A673 (cell line): ENCODE measurements at regions of chr16 and their contacts with region 1.

Region 1: DNA sequence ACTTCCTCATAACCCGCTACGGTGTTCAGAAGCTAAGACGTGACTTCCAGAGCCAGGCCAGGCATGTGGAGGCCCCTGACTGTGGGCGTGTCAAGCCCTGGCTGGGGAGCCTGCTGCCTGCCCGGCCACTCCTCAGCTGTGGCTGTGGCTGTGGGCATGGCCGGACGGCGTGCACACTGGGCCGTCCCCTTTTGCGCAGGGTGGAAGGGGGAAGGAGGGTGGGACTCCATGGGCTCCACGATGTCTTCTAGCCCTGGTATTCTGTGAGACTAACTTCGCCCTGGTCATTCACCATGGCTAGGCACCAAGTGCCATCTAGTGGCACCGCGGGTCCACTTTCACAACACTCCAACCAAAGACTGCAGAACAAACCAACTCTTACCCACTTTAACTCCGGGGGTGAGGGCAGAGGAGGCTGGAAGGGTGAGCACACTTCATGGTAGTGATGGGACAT is 67.9 kb downstream of the N4BP1 start:
- DNase-seq: peak; percentile 60
- H3K4me3 ChIP-seq: no peak overlapping the region
- H3K27ac ChIP-seq: no peak overlapping the region
- H3K4me1 ChIP-seq: no peaks in the 10 kb centered on the region
- H3K27me3 ChIP-seq: no peaks in the 10 kb centered on the region
- CTCF ChIP-seq: peak; percentile 65

Region 2: DNA sequence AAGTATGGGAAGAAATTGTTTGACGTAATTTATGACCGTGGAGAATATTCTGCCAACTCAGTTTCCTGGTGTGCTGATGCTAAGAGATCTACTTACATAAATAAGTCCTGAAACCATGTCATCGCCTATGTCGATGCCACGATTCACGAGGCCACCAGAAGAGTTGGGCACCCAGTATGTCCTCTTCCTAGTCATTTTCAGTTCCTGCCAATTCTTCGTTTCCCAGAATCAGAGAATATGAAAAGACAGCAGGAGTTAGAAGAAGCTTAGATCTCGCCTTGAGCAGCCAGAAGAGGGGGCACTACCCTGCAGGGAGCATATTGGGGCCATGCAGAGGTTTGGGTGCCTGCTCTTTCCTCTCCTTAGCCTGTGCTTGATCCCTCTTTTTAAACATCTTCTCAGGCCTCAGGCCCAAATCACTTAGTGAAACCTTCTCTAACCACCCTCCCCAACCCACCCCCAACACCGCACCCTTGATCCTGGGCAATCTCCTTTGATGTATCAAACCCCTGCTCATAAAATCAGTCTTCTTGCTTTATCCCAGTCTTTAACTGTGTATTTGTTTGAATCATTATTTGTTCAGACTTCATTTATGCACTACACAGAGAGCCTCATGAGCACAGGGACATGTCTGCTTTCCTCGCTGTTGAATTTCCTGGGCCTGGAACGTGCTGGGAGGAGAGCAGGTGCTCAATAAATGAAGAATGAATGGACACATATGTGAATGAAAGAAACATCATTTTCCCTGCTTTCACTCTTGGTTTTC is 310.1 kb before region 1 on chr16:
- CTCF ChIA-PET with region 1: no interaction called
- POLR2A ChIA-PET with region 1: no interaction called
- intact Hi-C with region 1: loop called (anchors 5 kb)
- DNase-seq: peak; percentile 59
- H3K4me3 ChIP-seq: no peak overlapping the region
- H3K27ac ChIP-seq: no peak overlapping the region
- H3K4me1 ChIP-seq: no peaks in the 10 kb centered on the region
- H3K27me3 ChIP-seq: no peaks in the 10 kb centered on the region
- CTCF ChIP-seq: peak; percentile 71

Region 3: DNA sequence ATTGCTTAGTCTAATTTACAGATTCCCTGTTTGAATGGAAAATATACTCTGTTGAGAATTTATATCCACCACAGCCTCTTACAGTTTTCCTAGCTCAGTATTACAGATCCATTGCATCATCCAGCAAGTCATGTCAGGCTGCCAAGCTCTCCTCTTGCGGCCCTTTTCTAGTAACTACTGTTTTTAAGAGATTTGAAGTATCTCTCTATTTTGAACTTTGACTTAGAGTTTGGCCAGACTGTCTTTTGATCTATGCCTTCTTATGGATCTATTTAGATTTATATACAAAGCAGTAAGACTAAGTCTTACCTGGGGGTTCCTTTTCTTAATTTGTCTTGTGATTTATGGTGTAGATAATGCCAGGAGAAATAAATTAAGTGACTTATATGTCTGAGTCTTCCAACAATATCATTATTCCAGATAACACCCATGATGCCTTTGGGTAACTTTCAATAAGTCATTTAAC is 241.6 kb before region 1 on chr16:
- CTCF ChIA-PET with region 1: no interaction called
- POLR2A ChIA-PET with region 1: no interaction called
- intact Hi-C with region 1: no loop called
- DNase-seq: peak; percentile 45
- H3K4me3 ChIP-seq: no peak overlapping the region
- H3K27ac ChIP-seq: peak overlapping the region; percentile 84
- H3K4me1 ChIP-seq: peaks cover 20% of the 10 kb centered on the region
- H3K27me3 ChIP-seq: no peaks in the 10 kb centered on the region
- CTCF ChIP-seq: no peak

Region 4: DNA sequence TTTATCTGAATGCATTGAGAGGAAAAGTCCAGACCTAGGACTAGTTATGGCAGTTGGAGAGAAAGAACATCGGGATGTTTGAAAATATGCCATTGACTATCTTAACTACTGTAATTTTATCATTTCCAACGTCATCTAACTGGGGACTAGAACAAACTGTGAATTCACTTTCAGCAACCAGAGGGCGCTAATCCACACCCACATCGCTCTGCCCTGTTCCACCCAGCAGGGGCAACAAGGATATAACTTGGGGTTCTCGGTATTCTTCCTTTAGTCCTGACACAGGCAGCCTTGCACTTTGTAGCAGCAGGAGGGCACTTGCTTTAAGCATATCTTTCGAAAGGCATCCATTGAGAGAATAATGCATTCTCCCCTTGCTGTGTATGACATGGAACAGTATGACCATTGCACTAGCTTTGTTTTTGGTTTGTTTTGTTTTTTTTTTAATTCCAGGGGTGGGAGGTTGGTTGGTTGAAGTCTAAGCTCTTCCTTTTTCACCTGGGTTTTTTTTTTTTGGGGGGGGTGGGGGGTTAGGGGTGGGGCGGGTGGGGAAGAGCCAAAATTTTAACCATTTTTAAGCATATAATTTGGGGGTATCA is 188.4 kb before region 1 on chr16:
- CTCF ChIA-PET with region 1: interaction called, 4 read pairs
- POLR2A ChIA-PET with region 1: no interaction called
- intact Hi-C with region 1: loop called (anchors 2 kb)
- DNase-seq: peak; percentile 91
- H3K4me3 ChIP-seq: no peak overlapping the region
- H3K27ac ChIP-seq: no peak overlapping the region
- H3K4me1 ChIP-seq: no peaks in the 10 kb centered on the region
- H3K27me3 ChIP-seq: no peaks in the 10 kb centered on the region
- CTCF ChIP-seq: peak; percentile 93

Region 5: GRCh38 chr16:48452977-48453760 is 88.9 kb before region 1 on chr16:
- CTCF ChIA-PET with region 1: no interaction called
- POLR2A ChIA-PET with region 1: no interaction called
- intact Hi-C with region 1: no loop called
- DNase-seq: no peak
- H3K4me3 ChIP-seq: no peak overlapping the region
- H3K27ac ChIP-seq: no peak overlapping the region
- H3K4me1 ChIP-seq: no peaks in the 10 kb centered on the region
- H3K27me3 ChIP-seq: no peaks in the 10 kb centered on the region
- CTCF ChIP-seq: no peak